PC-3 (cell line): ENCODE measurements at regions of chr2 and their contacts with region 1.

Region 1: DNA sequence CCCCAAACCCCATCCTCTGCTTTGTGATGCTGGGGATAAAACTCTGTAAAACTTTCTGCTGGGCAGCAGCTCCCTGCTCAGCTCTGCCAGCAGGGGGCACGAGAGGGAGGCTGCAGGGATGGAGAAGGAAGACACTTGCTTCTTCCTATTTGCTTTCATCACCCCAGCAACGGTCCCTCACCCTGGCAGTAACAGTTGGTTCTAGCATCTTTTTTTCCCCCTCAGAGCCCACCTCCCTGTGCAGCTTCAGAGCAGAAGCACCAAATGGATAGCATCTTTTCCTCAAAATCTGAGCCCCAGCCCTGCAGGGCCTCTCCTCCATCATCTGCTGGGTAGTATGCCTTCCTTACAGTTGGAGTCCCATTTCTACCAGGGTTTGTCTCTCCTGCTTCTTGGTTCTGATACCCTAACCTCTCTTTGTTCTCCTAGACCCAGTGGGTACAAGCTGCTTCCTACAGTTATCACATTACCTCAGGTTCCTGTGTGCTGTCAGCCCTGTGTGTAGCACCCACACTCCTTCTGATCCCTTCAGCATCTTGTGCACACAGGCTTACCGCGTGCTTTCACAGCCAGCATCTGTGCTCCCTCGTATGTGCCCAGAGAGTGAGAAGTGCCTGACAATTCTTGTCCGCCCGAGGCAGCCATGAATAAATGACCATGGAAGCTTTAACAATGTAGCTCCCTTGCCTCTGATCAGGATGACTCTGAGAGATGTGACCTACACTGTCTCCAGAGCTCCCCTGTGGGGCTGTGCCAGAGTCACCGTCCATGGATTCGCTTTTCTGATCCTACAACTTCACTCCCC is 14.5 kb downstream of the CKAP2L start:
- DNase-seq: peak; percentile 78
- ATAC-seq: peak; percentile 92
- H3K4me3 ChIP-seq: no peak overlapping the region
- H3K27ac ChIP-seq: peak overlapping the region; percentile 33
- H3K4me1 ChIP-seq: no peaks in the 10 kb centered on the region
- H3K27me3 ChIP-seq: no peaks in the 10 kb centered on the region
- CTCF ChIP-seq: peak; percentile 96

Region 2: DNA sequence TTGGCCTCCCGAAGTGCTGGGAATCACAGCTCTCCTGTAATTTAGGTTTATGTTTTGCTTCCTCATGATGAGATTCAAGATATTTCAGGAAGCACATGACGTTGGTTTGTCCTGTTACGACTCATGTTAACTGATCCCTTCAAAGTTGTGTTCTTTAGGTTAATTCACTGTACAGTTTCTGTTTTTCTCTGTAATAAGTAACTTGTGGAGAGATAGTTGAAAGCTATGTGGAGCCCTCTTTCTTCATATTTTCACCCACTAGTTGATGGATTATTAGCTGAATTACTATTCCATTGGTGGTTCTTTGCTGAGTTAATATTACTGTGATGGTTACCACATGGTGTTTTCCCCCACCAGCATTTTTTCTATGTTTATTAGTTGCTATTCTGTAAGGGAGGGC is 183.9 kb before region 1 on chr2:
- CTCF ChIA-PET with region 1: no interaction called
- POLR2A ChIA-PET with region 1: no interaction called
- intact Hi-C with region 1: no loop called
- DNase-seq: no peak
- ATAC-seq: no peak
- H3K4me3 ChIP-seq: no peak overlapping the region
- H3K27ac ChIP-seq: no peak overlapping the region
- H3K4me1 ChIP-seq: no peaks in the 10 kb centered on the region
- H3K27me3 ChIP-seq: no peaks in the 10 kb centered on the region
- CTCF ChIP-seq: no peak

Region 3: DNA sequence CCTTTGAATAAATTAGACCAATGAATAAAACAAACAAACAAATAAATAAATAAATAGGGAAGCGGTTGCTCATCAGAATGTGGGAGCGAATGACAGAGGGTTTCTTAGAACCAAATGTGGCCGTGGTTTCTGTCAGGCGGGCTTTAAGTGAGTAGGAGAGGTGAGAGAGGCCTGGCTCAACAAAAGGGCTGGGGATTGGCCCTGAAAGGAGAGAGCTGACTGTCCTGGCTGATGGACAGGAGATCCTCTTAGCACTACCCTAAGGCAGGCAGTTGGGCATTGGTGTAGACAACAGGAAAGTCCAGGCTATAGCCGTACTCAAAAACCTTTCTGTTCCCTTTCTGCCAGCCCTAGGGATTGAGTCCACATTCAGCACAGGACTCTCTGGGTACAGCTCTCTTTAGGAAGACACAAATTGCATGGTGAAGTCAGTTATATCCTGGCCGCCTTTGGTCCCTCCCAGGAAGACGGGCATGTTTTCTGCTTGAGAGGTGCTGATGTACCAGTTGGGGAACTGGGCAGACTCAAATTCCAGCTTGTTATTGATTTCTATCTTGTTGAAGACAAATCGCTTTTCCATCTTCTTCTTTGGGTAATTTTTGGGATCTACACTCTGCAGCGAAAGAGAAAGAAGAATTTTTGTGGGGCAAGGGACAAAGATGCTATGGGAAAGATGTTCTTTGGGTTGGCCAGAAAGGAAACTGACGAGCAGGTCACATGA is 80.2 kb after region 1 on chr2:
- CTCF ChIA-PET with region 1: interaction called, 3 read pairs
- POLR2A ChIA-PET with region 1: interaction called, 11 read pairs
- intact Hi-C with region 1: no loop called
- DNase-seq: no peak
- ATAC-seq: no peak
- H3K4me3 ChIP-seq: no peak overlapping the region
- H3K27ac ChIP-seq: no peak overlapping the region
- H3K4me1 ChIP-seq: peaks cover 13% of the 10 kb centered on the region
- H3K27me3 ChIP-seq: no peaks in the 10 kb centered on the region
- CTCF ChIP-seq: no peak

Region 4: GRCh38 chr2:112881217-112881985 is 131.4 kb after region 1 on chr2:
- CTCF ChIA-PET with region 1: interaction called, 9 read pairs
- POLR2A ChIA-PET with region 1: no interaction called
- intact Hi-C with region 1: loop called (anchors 2 kb)
- DNase-seq: peak; percentile 85
- ATAC-seq: peak; percentile 60
- H3K4me3 ChIP-seq: no peak overlapping the region
- H3K27ac ChIP-seq: peak overlapping the region; percentile 99
- H3K4me1 ChIP-seq: peaks cover 53% of the 10 kb centered on the region
- H3K27me3 ChIP-seq: no peaks in the 10 kb centered on the region
- CTCF ChIP-seq: no peak

Region 5: DNA sequence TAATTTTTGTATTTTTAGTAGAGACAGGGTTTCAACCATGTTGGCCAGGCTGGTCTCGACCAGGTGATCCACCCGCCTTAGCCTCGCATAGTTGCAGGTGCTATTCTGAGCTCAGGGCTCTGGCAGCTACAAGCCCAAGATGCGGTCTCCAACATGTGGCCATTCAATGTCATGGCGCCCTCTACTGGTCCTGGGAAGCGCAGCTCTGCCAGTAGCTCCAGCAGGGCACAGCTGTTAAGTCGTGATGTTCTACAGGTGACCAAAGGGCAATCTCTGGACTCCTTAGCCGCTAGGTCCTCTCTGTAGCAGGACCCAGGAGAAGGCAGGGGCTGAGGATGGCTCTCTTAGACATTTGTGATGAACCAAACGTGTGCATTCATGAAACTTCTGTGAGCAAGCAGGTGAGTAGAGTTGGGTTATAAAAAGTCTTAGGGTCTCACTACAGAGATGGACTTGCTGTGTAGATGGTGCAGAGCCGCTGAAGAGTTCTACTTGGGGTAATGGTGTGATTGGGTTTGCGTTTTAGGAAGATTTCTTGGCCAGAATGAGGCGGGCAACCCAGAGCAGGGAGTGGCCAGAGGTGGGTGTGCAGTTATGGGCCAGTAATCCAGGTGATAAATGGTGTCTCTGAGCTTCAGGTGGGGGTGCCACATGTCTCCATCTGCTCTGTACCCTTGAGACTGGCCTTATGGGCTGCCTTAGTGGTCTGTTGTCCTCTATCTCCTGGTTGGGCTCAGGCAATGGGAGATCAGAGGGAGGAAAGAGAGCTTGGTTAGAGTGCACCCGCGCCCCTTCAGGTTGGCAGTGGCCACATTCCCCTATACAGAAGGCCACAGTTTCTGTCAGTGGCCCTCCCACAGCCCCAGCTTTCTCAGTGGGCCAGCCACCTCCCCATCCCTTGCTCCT is 192.0 kb after region 1 on chr2:
- CTCF ChIA-PET with region 1: interaction called, 22 read pairs
- POLR2A ChIA-PET with region 1: no interaction called
- intact Hi-C with region 1: loop called (anchors 1 kb)
- DNase-seq: peak; percentile 87
- ATAC-seq: peak; percentile 92
- H3K4me3 ChIP-seq: no peak overlapping the region
- H3K27ac ChIP-seq: peak overlapping the region; percentile 14; the same call in 1 of the 2 replicates
- H3K4me1 ChIP-seq: peaks cover 22% of the 10 kb centered on the region
- H3K27me3 ChIP-seq: no peaks in the 10 kb centered on the region
- CTCF ChIP-seq: peak; percentile 92

Region 6: GRCh38 chr2:112958428-112959108 is 208.6 kb after region 1 on chr2:
- CTCF ChIA-PET with region 1: interaction called, 8 read pairs
- POLR2A ChIA-PET with region 1: no interaction called
- intact Hi-C with region 1: loop called (anchors 2 kb)
- DNase-seq: peak; percentile 69
- ATAC-seq: peak; percentile 94
- H3K4me3 ChIP-seq: peak overlapping the region; percentile 33; the same call in 1 of the 2 replicates
- H3K27ac ChIP-seq: peak overlapping the region; percentile 59
- H3K4me1 ChIP-seq: peaks cover 12% of the 10 kb centered on the region
- H3K27me3 ChIP-seq: no peaks in the 10 kb centered on the region
- CTCF ChIP-seq: peak; percentile 87